SK-N-SH (cell line): ENCODE measurements at regions of chr12 and their contacts with region 1.

Region 1: DNA sequence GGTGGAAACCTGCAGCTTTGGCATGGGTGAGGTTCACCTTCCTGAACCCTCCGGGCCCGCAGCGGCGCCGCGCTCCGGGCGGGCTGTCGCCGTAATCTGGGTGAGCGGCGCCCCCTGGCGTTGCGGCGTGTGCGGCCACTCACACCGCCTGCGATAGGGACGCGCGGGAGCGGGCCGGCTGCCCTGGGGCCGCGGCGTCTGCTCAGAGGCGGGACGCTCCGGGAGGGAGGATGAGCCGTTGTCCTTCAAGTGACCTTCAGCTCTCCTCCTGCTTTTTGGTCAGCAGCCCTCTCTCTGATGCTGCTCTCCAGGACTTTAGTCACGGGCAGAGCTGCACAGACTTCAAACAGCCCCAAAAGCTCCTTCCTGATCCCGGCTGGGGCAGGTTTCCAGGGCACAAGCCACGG is 211.7 kb upstream of the FKBP4 start:
- DNase-seq: peak; percentile 92
- H3K4me3 ChIP-seq: peak overlapping the region in 1 of 2 experiments; percentile 26; a peak in 2 of 4 replicates
- H3K27ac ChIP-seq: no peak overlapping the region
- H3K4me1 ChIP-seq: peaks cover 0 to 24% of the 10 kb centered on the region in 2 experiments; a peak in 1 of 4 replicates
- H3K27me3 ChIP-seq: no peaks in the 10 kb centered on the region
- CTCF ChIP-seq: peak; percentile 76
- EP300 ChIP-seq: no peak; a peak in 1 of 4 replicates
- RAD21 ChIP-seq: peak; percentile 87

Region 2: DNA sequence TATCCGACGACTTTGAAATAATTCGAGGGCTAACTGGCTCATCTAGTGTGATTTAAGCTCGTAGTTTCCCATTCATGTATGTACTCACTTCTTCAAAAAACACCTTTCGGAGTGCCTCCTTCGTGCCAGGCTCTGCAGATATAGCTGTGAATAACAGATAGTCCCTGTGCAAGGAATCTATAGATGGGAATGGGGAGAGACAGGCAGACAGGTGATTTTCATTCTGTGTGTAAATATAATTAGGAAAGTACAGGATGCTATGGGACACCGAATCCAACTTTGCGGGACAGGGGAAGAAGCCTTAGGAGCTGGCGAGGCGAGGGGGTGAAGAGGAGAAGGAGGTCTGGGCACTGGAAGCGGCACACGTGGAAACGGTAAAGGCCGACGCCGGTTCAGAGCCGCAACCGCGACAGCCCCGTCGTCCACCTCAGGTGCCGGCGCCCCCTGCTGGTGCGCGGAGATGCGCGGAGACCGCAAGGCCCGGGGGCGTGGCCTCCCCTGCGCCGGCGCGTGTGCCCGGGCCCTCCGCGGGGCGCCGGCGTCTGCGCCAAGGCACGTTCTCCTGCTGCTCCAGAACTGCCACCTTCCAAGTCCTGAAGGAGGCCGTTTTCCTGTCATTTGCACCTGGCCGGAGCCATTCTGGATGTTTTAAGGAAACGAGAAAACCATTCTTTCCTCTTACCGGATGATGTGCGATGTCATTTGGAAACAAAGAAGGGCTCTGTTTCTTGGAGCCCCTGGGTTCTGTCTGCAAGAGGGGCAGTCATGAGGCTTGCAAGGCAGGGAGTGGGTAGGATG is 548.3 kb before region 1 on chr12:
- CTCF ChIA-PET with region 1: interaction called, 15 read pairs
- POLR2A ChIA-PET with region 1: no interaction called
- DNase-seq: peak; percentile 97
- H3K4me3 ChIP-seq: peak overlapping the region; percentile 35 to 56
- H3K27ac ChIP-seq: no peak overlapping the region; a peak in 1 of 4 replicates
- H3K4me1 ChIP-seq: peaks cover 0 to 12% of the 10 kb centered on the region in 2 experiments; a peak in 1 of 4 replicates
- H3K27me3 ChIP-seq: peaks cover 22% of the 10 kb centered on the region; the same call in 1 of the 2 replicates
- CTCF ChIP-seq: peak; percentile 83
- EP300 ChIP-seq: 0 out of 4 replicates have a peak, but pooled peaks of 1 of the 2 experiments have one; percentile 5
- RAD21 ChIP-seq: peak; percentile 75

Region 3: GRCh38 chr12:2064071-2064507 is 519.0 kb before region 1 on chr12:
- CTCF ChIA-PET with region 1: interaction called, 47 read pairs
- POLR2A ChIA-PET with region 1: no interaction called
- DNase-seq: peak; percentile 73
- H3K4me3 ChIP-seq: peak overlapping the region in 1 of 2 experiments; percentile 31; a peak in 1 of 4 replicates
- H3K27ac ChIP-seq: peak overlapping the region in 1 of 2 experiments; percentile 82; a peak in 2 of 4 replicates
- H3K4me1 ChIP-seq: peaks cover 0 to 18% of the 10 kb centered on the region in 2 experiments; a peak in 2 of 4 replicates
- H3K27me3 ChIP-seq: no peaks in the 10 kb centered on the region
- CTCF ChIP-seq: no peak
- EP300 ChIP-seq: no peak
- RAD21 ChIP-seq: no peak

Region 4: DNA sequence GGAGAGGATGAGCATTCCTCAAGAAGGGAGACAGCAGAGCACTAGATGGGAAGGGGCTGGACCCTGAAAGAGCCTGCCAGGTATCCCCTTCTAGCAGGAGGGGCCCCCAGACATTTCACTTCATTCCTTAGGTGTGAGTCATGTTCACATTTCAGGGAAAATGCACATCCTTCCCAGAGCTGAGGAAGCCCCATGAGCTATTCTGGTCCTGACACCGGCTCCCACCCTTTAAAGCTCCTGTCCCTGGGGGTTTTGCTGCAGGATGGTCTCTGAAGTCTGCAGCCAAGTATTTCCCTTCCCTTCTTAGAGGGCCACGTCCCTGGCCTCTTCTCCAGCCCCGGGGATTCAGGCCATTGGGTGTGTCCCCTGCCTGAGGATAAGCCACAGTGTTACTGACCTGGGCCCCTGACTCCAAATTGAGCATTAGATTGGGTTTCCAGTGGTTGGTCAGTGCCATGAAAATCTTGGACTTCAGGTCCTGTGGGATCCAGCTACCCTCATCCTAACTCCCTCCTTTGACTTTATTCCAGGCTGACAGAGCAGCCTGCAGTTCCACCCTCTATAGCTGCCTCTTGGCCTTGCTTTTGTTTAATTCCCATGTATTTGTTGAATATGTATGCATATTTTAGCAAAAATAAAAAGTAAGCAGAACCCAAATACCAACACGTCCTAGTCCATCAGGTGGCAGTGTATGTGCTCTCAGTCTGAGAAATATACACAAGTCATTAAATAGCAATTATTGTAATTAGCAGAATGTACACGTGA is 263.2 kb before region 1 on chr12:
- CTCF ChIA-PET with region 1: interaction called, 14 read pairs
- POLR2A ChIA-PET with region 1: no interaction called
- DNase-seq: no peak
- H3K4me3 ChIP-seq: no peak overlapping the region
- H3K27ac ChIP-seq: 0 out of 4 replicates have a peak overlapping the region, but pooled peaks of 1 of the 2 experiments have one; percentile 2
- H3K4me1 ChIP-seq: peaks cover 14 to 21% of the 10 kb centered on the region in 2 experiments; a peak in 1 of 4 replicates
- H3K27me3 ChIP-seq: no peaks in the 10 kb centered on the region
- CTCF ChIP-seq: no peak
- EP300 ChIP-seq: no peak
- RAD21 ChIP-seq: no peak

Region 5: DNA sequence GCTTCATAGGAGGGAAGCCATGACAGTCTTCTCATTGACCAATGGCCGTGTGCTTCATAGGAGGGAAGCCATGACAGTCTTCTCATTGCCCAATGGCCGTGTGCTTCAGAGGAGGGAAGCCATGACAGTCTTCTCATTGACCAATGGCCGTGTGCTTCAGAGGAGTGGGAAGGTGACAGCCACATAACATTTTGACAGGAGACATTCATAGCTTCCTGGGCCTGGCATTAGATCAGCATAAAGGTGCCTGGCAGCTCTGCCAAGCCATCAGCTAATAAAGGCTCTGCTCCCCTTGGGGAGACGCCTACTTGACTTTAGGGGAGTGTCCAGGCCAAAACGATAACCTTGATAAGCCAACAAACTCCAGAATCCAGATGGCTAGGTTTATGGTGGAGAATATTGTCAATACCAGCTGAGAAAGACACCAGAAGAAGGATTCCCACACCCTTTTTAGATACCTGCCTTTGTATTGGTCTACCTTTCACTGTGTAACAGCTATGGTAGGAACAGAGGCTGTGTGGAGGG is 62.3 kb before region 1 on chr12:
- CTCF ChIA-PET with region 1: no interaction called
- POLR2A ChIA-PET with region 1: no interaction called
- DNase-seq: no peak
- H3K4me3 ChIP-seq: no peak overlapping the region
- H3K27ac ChIP-seq: no peak overlapping the region
- H3K4me1 ChIP-seq: peaks cover 0 to 6% of the 10 kb centered on the region in 2 experiments; a peak in 1 of 4 replicates
- H3K27me3 ChIP-seq: no peaks in the 10 kb centered on the region
- CTCF ChIP-seq: no peak
- EP300 ChIP-seq: no peak
- RAD21 ChIP-seq: no peak

Region 6: DNA sequence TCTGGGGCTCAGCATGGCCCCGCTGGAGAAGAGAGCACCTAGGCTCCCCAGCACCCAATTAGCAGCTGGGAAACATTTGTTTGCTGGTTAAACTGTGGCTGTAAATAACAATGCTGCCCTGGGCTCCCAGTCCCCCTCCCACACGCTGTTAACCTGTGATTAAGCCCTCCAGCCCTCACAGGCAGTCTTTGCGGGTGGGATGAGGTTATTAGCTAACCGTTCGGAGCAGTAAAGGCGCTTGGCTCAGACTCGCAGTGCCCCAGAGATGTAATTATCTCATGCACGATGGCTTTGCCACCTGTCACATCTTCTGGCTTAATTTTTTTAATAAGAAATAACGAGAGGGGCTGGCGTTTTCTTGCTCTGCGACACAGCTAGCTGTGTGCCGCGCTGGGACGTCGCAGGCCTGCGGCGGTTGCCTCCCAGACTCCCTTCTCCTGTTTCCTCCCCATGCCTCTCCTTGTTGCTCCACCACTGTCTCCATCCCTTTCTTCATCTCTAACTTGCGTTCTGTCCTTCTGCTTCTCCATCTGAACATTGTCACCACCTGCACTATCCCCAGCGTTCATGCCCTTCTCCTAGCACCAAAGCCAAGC is 27.5 kb before region 1 on chr12:
- CTCF ChIA-PET with region 1: interaction called, 27 read pairs
- POLR2A ChIA-PET with region 1: no interaction called
- DNase-seq: no peak
- H3K4me3 ChIP-seq: no peak overlapping the region
- H3K27ac ChIP-seq: no peak overlapping the region
- H3K4me1 ChIP-seq: peaks cover 0 to 14% of the 10 kb centered on the region in 2 experiments; a peak in 1 of 4 replicates
- H3K27me3 ChIP-seq: no peaks in the 10 kb centered on the region
- CTCF ChIP-seq: no peak
- EP300 ChIP-seq: no peak
- RAD21 ChIP-seq: no peak

Region 7: DNA sequence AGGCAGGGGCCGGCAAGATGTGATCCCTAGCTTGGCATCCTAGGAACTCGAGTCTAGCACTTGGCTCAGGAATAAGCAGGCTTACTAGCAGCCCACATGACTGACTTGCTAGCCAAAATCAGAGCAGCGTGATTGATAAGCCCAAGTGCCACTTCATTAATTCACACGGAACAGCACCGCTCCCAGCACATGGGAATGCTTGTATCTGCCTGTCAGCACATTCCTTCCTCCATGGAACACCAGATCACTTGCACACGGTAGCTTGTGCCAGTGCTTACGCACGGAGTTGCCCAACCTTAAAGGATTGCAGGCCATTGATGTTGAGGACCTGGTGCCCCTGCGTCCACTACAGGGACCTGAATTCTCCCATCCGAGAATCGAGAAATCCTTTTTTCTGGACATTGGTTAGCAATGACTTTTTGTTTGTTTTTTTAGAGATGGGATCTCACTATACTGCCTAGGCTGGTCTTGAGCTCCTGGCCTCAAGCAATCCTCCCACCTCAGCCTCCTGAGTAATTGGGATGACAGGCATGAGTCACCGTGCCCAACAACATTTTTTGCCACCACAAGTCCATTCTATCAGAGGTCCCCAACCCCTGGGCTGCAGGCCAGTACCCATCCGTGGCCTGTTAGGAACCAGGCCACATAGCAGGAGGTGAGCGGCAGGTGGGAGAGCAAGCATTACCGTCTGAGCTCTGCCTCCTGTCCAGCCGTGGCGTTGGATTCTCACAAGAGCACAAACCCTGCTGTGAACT is 463.5 kb after region 1 on chr12:
- CTCF ChIA-PET with region 1: no interaction called
- POLR2A ChIA-PET with region 1: no interaction called
- DNase-seq: no peak
- H3K4me3 ChIP-seq: no peak overlapping the region
- H3K27ac ChIP-seq: no peak overlapping the region
- H3K4me1 ChIP-seq: no peaks in the 10 kb centered on the region
- H3K27me3 ChIP-seq: no peaks in the 10 kb centered on the region
- CTCF ChIP-seq: no peak
- EP300 ChIP-seq: no peak
- RAD21 ChIP-seq: no peak

Region 8: DNA sequence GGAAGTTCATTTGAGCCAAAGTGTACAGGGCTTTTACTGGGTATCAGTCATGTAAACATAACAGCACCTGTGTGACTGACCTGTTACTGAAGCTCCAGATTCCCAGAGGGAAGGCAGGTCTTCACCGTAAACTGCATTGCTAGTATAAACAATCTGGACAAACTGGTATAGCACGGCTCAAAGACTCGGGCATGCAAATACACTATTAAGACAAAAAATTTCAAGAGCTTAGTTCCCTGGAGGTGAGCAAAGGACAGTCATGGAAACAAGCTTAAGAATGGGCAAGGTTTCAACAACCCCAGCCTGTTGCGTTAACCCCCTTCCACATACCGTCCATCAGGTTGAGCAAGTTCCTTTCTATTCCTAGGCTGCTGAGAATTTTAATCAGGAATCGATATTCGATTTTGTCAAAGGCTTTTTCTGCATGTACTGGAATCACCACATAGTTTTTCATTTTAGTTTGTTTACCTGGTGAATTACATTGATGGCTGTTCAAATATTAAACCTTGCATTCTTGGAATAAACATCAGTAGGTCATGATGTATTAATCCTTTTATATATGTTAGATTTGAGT is 1280.7 kb after region 1 on chr12:
- CTCF ChIA-PET with region 1: no interaction called
- POLR2A ChIA-PET with region 1: no interaction called
- DNase-seq: no peak
- H3K4me3 ChIP-seq: no peak overlapping the region
- H3K27ac ChIP-seq: no peak overlapping the region
- H3K4me1 ChIP-seq: no peaks in the 10 kb centered on the region
- H3K27me3 ChIP-seq: no peaks in the 10 kb centered on the region
- CTCF ChIP-seq: no peak
- EP300 ChIP-seq: no peak
- RAD21 ChIP-seq: no peak